ENCODE measurements at regions of chr5 and their contacts with region 1.

Region 1: GRCh38 chr5:96807075-96807654 is 580 bp downstream of the ERAP1 start:
- DNase-seq: peak in 4 of 14 experiments; percentile 37 to 52 (median 38)
- ATAC-seq: peak; percentile 7
- H3K4me3 ChIP-seq: peak overlapping the region; percentile 79
- H3K4me3 Mint-ChIP-seq: peak overlapping the region; percentile 98
- H3K27ac ChIP-seq: peak overlapping the region; percentile 91 to 96
- H3K27ac Mint-ChIP-seq: peak overlapping the region; percentile 99
- H3K4me1 ChIP-seq: peaks cover 62% of the 10 kb centered on the region
- H3K4me1 Mint-ChIP-seq: peaks cover 86% of the 10 kb centered on the region
- H3K27me3 ChIP-seq: no peaks in the 10 kb centered on the region
- H3K27me3 Mint-ChIP-seq: peaks cover 5% of the 10 kb centered on the region
- CTCF ChIP-seq: no peak

Region 2: GRCh38 chr5:96668725-96669124 is 138.4 kb before region 1 on chr5:
- CTCF ChIA-PET with region 1: no interaction called
- POLR2A ChIA-PET with region 1: interaction called, 24 read pairs
- intact Hi-C with region 1: loop called in 1 of 2 experiments (anchors 5 kb)
- DNase-seq: no peak
- ATAC-seq: no peak
- H3K4me3 ChIP-seq: no peak overlapping the region
- H3K4me3 Mint-ChIP-seq: no peak overlapping the region
- H3K27ac ChIP-seq: no peak overlapping the region
- H3K27ac Mint-ChIP-seq: no peak overlapping the region
- H3K4me1 ChIP-seq: peaks cover 6% of the 10 kb centered on the region
- H3K4me1 Mint-ChIP-seq: peaks cover 66% of the 10 kb centered on the region
- H3K27me3 ChIP-seq: no peaks in the 10 kb centered on the region
- H3K27me3 Mint-ChIP-seq: no peaks in the 10 kb centered on the region
- CTCF ChIP-seq: no peak

Region 3: GRCh38 chr5:96771395-96771794 is 35.8 kb before region 1 on chr5:
- CTCF ChIA-PET with region 1: no interaction called
- POLR2A ChIA-PET with region 1: interaction called, 12 read pairs
- intact Hi-C with region 1: no loop called
- DNase-seq: peak in 1 of 14 experiments; percentile 37
- ATAC-seq: no peak
- H3K4me3 ChIP-seq: no peak overlapping the region
- H3K4me3 Mint-ChIP-seq: no peak overlapping the region
- H3K27ac ChIP-seq: no peak overlapping the region
- H3K27ac Mint-ChIP-seq: peak overlapping the region; percentile 81
- H3K4me1 ChIP-seq: no peaks in the 10 kb centered on the region
- H3K4me1 Mint-ChIP-seq: peaks cover 8% of the 10 kb centered on the region
- H3K27me3 ChIP-seq: no peaks in the 10 kb centered on the region
- H3K27me3 Mint-ChIP-seq: no peaks in the 10 kb centered on the region
- CTCF ChIP-seq: no peak

Region 4: GRCh38 chr5:96868603-96869371 is 61.6 kb after region 1 on chr5:
- CTCF ChIA-PET with region 1: interaction called, 8 read pairs
- POLR2A ChIA-PET with region 1: interaction called, 11 read pairs
- intact Hi-C with region 1: loop called in 1 of 2 experiments (anchors 5 kb)
- DNase-seq: peak in 6 of 14 experiments; percentile 18 to 81 (median 52)
- ATAC-seq: peak; percentile 99
- H3K4me3 ChIP-seq: no peak overlapping the region
- H3K4me3 Mint-ChIP-seq: no peak overlapping the region
- H3K27ac ChIP-seq: no peak overlapping the region
- H3K27ac Mint-ChIP-seq: peak overlapping the region; percentile 22
- H3K4me1 ChIP-seq: peaks cover 21% of the 10 kb centered on the region
- H3K4me1 Mint-ChIP-seq: peaks cover 45% of the 10 kb centered on the region
- H3K27me3 ChIP-seq: no peaks in the 10 kb centered on the region
- H3K27me3 Mint-ChIP-seq: no peaks in the 10 kb centered on the region
- CTCF ChIP-seq: peak; percentile 95

Region 5: DNA sequence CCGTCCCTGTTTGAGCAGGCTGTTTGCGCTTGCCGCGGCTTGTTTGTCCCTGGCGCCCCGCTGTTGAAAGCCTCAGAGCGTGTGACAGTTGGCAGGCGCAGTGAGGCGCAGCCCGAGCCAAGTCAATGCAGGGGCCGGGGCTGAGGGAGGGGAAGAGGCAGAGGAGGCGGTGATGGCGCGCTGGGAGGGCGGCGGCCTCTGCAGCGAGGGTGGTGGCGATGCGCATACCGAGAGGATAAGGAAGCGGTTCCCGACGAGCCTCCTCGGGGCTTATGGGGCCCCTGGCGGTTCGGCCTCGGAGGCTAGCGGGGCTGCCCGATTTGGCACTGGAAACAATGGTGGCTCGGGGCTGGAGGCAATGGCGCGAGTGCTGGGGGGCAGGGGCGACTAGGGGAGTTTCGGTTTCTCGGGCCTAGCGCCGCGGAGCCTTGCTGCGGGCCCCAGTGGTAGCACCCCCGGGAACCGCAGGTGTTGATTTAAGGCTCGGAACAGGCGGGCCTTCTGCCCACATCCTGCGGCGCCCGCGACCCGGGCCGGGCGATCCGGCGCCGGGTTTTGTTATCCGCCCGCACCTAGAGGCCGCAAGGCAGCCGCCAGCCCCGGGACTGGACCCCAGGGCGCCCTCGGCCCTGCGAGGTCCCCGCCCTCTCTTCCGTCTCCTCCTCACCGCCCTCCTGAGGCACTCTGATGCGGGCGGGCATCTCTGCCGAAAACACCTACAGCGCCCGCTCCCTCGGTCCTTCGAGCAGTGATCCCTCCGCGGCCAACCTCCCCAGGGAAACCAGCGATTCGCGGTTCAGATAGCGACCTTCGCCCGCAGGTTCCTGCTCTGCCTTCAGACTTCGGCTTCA is 127.8 kb after region 1 on chr5:
- CTCF ChIA-PET with region 1: no interaction called
- POLR2A ChIA-PET with region 1: interaction called, 38 read pairs
- intact Hi-C with region 1: loop called (anchors 5 kb)
- DNase-seq: peak; percentile 86 to 98 (median 94)
- ATAC-seq: peak; percentile 63
- H3K4me3 ChIP-seq: peak overlapping the region; percentile 74
- H3K4me3 Mint-ChIP-seq: peak overlapping the region; percentile 94
- H3K27ac ChIP-seq: peak overlapping the region; percentile 83 to 94
- H3K27ac Mint-ChIP-seq: peak overlapping the region; percentile 96
- H3K4me1 ChIP-seq: peaks cover 32% of the 10 kb centered on the region
- H3K4me1 Mint-ChIP-seq: peaks cover 73% of the 10 kb centered on the region
- H3K27me3 ChIP-seq: no peaks in the 10 kb centered on the region
- H3K27me3 Mint-ChIP-seq: no peaks in the 10 kb centered on the region
- CTCF ChIP-seq: no peak

Region 6: DNA sequence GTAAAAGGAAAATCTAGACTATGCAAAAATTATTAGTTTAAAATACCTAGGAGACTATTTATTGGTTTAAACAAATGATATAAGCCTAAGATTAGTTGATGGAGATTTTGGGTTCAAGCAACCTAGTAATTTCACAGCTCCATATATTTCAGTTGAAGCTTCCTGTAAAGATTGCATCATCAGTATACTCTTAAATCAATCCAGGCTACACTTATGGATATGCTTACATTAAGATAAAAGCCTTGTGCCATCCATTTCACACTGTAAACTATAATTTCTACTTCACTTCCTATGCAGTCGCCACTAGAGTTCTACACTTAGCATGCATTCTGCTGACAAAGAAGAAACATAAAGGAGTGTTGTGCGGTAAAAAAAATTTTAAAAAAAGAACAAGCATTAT is 342.5 kb after region 1 on chr5:
- CTCF ChIA-PET with region 1: no interaction called
- POLR2A ChIA-PET with region 1: no interaction called
- intact Hi-C with region 1: no loop called
- DNase-seq: no peak
- ATAC-seq: no peak
- H3K4me3 ChIP-seq: no peak overlapping the region
- H3K4me3 Mint-ChIP-seq: no peak overlapping the region
- H3K27ac ChIP-seq: no peak overlapping the region
- H3K27ac Mint-ChIP-seq: no peak overlapping the region
- H3K4me1 ChIP-seq: no peaks in the 10 kb centered on the region
- H3K4me1 Mint-ChIP-seq: no peaks in the 10 kb centered on the region
- H3K27me3 ChIP-seq: no peaks in the 10 kb centered on the region
- H3K27me3 Mint-ChIP-seq: no peaks in the 10 kb centered on the region
- CTCF ChIP-seq: no peak